Aorta (tissue), 5 donors: ENCODE measurements at regions of chr7 and their contacts with region 1.

Region 1: DNA sequence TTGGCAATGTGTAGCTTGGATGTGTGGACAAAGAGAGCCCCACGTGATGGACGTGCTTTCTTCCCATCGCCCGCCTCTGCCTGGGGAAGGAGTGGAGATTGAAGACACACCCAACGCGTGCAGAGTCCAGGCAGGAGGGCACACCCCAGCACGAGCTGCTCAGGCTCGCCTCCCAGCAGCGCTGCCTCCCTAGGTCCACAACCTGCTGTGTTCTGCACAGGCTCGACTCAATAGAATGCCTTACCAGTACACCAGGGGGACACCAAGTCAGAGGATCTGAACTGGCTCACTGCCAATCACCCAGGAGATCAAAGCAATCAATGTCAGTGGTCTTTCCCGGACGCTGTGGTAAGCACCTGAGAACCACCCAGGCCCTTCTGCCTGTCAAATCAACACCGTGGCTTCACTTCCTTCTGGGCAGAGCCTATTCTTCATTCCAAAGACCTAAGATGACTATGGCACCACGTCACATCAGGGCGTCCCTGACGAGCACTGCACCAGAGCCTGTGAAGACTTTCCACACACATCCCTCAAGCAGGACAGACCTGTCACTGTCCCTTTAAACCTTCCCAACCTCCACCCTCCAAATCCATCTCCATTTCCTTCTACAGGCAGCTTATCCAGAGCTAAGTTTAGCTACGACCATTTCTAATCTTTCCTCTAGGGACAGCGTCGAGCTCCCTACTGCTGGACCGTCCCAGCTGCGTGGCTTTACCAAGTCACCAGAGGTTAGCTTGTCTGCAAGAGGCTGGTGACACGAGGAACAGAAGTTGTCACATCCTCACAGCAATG is 72.3 kb downstream of the AMZ1 start:
- DNase-seq: peak; percentile 74 to 77
- ATAC-seq: peak; percentile 66
- H3K4me3 ChIP-seq: no peak overlapping the region
- H3K27ac ChIP-seq: peak overlapping the region in 1 of 2 donors; percentile 43
- H3K4me1 ChIP-seq: no peaks in the 10 kb centered on the region
- H3K27me3 ChIP-seq: no peaks in the 10 kb centered on the region

Region 2: DNA sequence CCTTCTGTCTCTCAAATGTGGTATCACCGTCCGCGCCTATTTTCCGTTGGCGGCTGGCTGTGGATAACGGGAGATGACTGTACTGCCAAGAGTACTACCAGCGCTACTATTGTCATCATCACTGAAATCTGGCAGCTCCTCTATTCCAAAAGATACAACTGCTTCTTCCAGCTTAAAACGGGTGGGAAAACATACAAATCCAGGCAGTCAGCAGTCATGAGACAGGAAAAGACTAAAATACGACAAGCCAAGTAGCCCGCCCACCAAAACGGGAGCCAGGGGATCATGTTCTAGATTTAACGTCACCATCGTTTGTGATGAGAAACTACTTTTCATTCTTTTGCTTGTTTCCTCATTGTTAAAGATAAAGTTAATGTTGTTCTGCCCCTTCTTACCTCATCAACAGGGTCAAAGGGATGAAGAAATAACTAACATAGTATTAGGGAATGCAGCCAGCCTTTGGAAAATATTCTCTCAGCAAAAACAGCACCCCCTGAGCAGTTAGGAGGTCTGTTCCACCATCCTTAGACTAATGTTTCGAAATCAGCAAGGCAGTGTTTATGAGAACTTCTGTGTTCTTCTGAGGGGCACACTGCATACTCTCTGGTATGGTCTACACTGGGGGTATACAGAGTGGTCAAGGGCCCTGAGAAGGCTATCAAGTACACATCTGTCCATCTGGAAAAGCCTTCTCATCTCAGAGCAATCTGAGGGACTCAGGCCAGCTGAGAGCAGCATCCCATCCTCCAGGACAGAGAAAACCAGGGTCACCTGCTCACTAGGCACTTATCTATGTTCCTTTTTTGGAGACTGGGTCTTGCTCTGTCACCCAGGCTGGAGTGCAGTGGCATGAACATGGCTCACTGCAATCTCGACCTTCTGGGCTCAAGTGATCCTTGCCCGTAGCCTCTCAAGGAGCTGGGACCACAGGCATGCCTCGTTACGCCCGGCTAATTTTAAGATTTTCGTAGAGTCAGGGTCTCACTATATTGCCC is 36.4 kb after region 1 on chr7:
- intact Hi-C with region 1: loop called in 1 of 2 experiments (anchors 5 kb)
- DNase-seq: peak; percentile 80 to 90
- ATAC-seq: peak; percentile 84
- H3K4me3 ChIP-seq: peak overlapping the region in 1 of 2 donors; percentile 6
- H3K27ac ChIP-seq: peak overlapping the region in 1 of 2 donors; percentile 16
- H3K4me1 ChIP-seq: no peaks in the 10 kb centered on the region
- H3K27me3 ChIP-seq: no peaks in the 10 kb centered on the region